ENCODE measurements at regions of chr15 and their contacts with region 1.

Region 1: GRCh38 chr15:66747886-66748707 is 46.1 kb downstream of the SMAD6 start:
- DNase-seq: peak; percentile 75
- H3K4me3 ChIP-seq: no peak overlapping the region
- H3K27ac ChIP-seq: peak overlapping the region; percentile 37
- H3K4me1 ChIP-seq: peaks cover 62% of the 10 kb centered on the region
- H3K27me3 ChIP-seq: no peaks in the 10 kb centered on the region
- CTCF ChIP-seq: no peak
- POLR2A ChIP-seq: no peak

Region 2: DNA sequence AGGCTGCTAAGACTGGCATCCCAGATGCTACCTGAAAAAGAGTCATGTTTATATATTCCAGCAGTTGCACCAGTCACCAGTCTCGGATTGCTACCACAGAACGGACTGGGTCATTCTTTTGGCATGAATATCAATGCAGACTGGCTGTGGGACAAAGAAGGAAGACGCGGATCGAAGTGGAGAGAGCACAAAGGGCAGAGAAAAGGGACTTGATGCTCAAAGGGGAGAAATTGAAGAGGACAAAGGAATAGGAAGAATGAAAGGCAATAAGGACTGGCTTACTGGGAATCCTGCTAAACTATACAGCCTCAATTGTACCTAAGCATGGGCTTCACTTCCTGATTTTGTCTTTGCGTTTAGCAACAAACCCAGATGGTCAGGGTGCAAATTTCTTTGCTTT is 470.0 kb before region 1 on chr15:
- CTCF ChIA-PET with region 1: no interaction called
- POLR2A ChIA-PET with region 1: no interaction called
- dilution Hi-C with region 1: no loop called
- intact Hi-C with region 1: no loop called
- DNase-seq: no peak
- H3K4me3 ChIP-seq: no peak overlapping the region
- H3K27ac ChIP-seq: no peak overlapping the region
- H3K4me1 ChIP-seq: no peaks in the 10 kb centered on the region
- H3K27me3 ChIP-seq: peaks cover 4 to 5% of the 10 kb centered on the region in 2 experiments
- CTCF ChIP-seq: no peak
- POLR2A ChIP-seq: no peak

Region 3: DNA sequence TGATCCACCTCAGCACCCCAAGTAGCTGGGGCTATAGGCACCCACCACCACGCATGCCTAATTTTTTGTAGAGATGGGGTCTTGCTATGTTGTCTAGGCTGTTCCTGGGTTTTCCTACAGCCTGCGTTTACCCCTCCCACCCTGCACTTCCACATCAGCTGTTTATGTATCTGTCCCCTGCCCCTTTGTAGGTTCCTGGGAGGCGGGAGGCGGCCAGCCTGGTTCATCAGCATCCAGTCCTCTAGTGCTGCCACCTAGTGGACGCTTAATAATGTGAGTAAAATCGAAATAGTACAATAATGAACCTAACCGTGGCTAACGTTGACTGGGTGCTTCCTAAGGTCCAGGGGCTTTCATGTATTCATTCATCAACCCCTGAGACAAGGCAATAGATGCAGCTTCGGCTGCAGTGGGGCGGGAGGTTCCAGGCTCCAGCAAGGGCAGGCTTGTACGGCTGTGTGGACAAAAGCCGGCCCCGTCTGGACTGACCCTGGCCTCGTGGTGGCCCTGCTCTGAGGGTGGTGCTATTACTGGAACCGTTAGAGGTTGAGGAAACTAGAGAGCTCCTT is 181.1 kb before region 1 on chr15:
- CTCF ChIA-PET with region 1: no interaction called
- POLR2A ChIA-PET with region 1: no interaction called
- dilution Hi-C with region 1: no loop called
- intact Hi-C with region 1: no loop called
- DNase-seq: peak; percentile 67
- H3K4me3 ChIP-seq: no peak overlapping the region
- H3K27ac ChIP-seq: no peak overlapping the region
- H3K4me1 ChIP-seq: no peaks in the 10 kb centered on the region
- H3K27me3 ChIP-seq: no peaks in the 10 kb centered on the region
- CTCF ChIP-seq: peak; percentile 66 to 70
- POLR2A ChIP-seq: no peak

Region 4: DNA sequence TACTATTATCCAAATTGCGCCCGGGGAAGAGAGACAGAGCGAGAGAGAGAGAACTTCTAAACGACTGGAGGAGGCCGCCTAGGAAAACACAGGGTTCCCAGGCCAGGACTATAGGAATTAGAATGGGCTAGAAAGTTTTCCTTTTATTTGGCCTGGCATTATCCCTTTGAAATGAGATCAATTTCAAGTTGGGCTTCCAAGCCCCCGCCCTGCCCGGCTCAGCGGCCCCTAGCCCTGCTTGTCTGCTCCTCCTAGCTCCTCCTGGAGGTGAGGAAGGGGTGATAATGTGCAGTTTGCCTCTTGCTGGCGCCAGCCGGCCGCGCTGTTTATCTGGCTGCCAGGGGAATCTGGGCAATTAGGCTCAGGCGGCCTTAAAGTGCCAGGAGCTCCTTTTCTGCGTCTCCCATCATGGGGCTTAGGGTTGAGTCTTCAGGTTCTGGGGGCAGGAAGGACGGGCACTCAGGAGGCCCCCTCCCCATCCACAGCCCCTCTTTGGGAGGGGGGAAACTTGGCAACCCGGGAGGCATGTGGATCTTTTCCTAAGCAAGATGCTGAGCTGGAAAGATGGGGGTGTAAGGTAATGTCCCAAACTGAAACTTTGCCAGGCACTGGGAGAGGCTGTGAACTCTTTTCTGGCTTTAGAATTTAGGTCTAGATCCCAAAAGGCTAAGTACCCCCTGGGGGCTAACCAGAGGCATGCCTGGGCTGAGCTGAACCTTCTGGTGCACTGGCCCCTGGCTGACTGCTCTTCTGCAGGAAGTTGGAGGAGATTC is 40.6 kb before region 1 on chr15:
- CTCF ChIA-PET with region 1: interaction called, 5 read pairs
- POLR2A ChIA-PET with region 1: no interaction called
- dilution Hi-C with region 1: no loop called
- intact Hi-C with region 1: loop called (anchors 1 kb)
- DNase-seq: peak; percentile 54
- H3K4me3 ChIP-seq: no peak overlapping the region
- H3K27ac ChIP-seq: peak overlapping the region; percentile 15
- H3K4me1 ChIP-seq: peaks cover 40% of the 10 kb centered on the region
- H3K27me3 ChIP-seq: no peaks in the 10 kb centered on the region
- CTCF ChIP-seq: peak in 1 of 2 donors; percentile 40
- POLR2A ChIP-seq: peak; percentile 15

Region 5: GRCh38 chr15:66765478-66766281 is 17.6 kb after region 1 on chr15:
- CTCF ChIA-PET with region 1: interaction called, 7 read pairs
- POLR2A ChIA-PET with region 1: no interaction called
- dilution Hi-C with region 1: no loop called
- intact Hi-C with region 1: loop called (anchors 1 kb)
- DNase-seq: peak; percentile 93
- H3K4me3 ChIP-seq: no peak overlapping the region
- H3K27ac ChIP-seq: peak overlapping the region; percentile 84
- H3K4me1 ChIP-seq: peaks cover 66% of the 10 kb centered on the region
- H3K27me3 ChIP-seq: no peaks in the 10 kb centered on the region
- CTCF ChIP-seq: no peak
- POLR2A ChIP-seq: peak; percentile 30

Region 6: GRCh38 chr15:66774001-66774814 is 26.1 kb after region 1 on chr15:
- CTCF ChIA-PET with region 1: interaction called, 6 read pairs
- POLR2A ChIA-PET with region 1: no interaction called
- dilution Hi-C with region 1: no loop called
- intact Hi-C with region 1: loop called (anchors 1 kb)
- DNase-seq: peak; percentile 80
- H3K4me3 ChIP-seq: no peak overlapping the region
- H3K27ac ChIP-seq: peak overlapping the region; percentile 25
- H3K4me1 ChIP-seq: peaks cover 21% of the 10 kb centered on the region
- H3K27me3 ChIP-seq: no peaks in the 10 kb centered on the region
- CTCF ChIP-seq: peak; percentile 92 to 96
- POLR2A ChIP-seq: no peak

Region 7: DNA sequence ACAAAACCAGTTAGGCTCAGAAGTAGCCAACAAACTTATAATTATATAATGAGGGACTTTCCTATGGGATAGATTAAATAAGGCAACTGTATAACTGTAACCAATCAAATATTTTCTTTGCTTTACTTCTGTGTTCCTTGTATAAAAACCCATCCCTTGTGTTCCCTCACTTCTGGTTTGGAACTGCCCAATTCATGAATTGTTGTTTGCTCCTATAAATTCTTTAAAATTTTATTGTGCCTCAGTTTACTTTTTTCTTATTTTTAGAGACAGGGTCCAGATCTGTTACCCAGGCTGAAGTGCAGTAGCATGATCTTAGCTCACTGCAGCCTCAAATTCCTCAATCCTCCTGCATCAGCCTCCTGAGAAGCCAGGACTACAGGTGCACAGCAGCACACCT is 109.6 kb after region 1 on chr15:
- CTCF ChIA-PET with region 1: no interaction called
- POLR2A ChIA-PET with region 1: no interaction called
- dilution Hi-C with region 1: no loop called
- intact Hi-C with region 1: no loop called
- DNase-seq: no peak
- H3K4me3 ChIP-seq: no peak overlapping the region
- H3K27ac ChIP-seq: no peak overlapping the region
- H3K4me1 ChIP-seq: no peaks in the 10 kb centered on the region
- H3K27me3 ChIP-seq: no peaks in the 10 kb centered on the region
- CTCF ChIP-seq: no peak
- POLR2A ChIP-seq: no peak